PC-3 (cell line): ENCODE measurements at regions of chr15 and their contacts with region 1.

Region 1: GRCh38 chr15:51380999-51381795 is 39.7 kb downstream of the GLDN start:
- DNase-seq: peak; percentile 77
- ATAC-seq: peak; percentile 87
- H3K4me3 ChIP-seq: no peak overlapping the region
- H3K27ac ChIP-seq: no peak overlapping the region
- H3K4me1 ChIP-seq: peaks cover 11% of the 10 kb centered on the region
- H3K27me3 ChIP-seq: no peaks in the 10 kb centered on the region
- CTCF ChIP-seq: peak; percentile 96

Region 2: GRCh38 chr15:51162865-51163762 is 218.1 kb before region 1 on chr15:
- CTCF ChIA-PET with region 1: interaction called, 3 read pairs
- POLR2A ChIA-PET with region 1: no interaction called
- intact Hi-C with region 1: loop called (anchors 5 kb)
- DNase-seq: peak; percentile 75
- ATAC-seq: peak; percentile 91
- H3K4me3 ChIP-seq: peak overlapping the region; percentile 56
- H3K27ac ChIP-seq: no peak overlapping the region
- H3K4me1 ChIP-seq: peaks cover 6% of the 10 kb centered on the region
- H3K27me3 ChIP-seq: no peaks in the 10 kb centered on the region
- CTCF ChIP-seq: peak; percentile 92

Region 3: DNA sequence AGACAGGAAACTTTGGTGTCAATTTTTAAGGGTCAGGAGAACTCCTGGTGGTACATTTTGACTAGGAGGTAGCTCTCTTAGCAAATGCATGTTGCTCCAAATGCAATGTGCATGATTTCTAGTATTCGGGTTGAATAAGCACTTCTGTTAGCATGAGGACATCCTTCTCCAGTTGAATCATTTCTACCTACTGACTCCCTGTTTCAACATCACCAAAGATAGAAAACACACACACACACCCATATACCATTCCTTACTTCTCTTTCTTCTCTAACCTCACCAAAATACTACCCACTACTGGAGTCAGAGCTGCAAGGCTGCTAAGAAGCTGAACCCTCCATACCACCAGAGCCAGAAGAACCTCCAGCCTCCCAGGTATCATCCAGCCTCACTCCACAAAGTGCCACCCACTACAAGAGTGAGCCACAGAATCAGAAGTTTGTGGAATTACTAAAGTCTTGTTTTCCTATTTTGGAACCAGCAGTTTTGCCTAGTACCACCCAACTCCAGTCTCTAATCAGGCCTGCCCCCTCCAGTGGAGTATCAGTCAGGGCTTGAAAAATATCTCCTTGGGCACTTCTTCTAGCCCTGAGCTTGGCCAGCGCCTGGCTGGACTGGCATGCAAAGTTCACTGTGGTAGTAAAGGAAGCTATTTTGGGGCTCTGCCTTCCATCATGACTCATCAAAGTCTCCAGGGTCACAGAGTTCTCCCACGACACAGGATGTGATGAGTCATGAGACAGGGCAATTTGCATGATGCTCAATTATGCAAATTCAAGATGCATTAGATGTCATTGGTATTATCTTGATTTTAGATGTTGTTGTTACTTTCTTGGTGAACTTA is 153.0 kb before region 1 on chr15:
- CTCF ChIA-PET with region 1: no interaction called
- POLR2A ChIA-PET with region 1: no interaction called
- intact Hi-C with region 1: loop called (anchors 1 kb)
- DNase-seq: peak; percentile 52
- ATAC-seq: peak; percentile 48; the same call in 1 of the 2 replicates
- H3K4me3 ChIP-seq: no peak overlapping the region
- H3K27ac ChIP-seq: no peak overlapping the region
- H3K4me1 ChIP-seq: peaks cover 25% of the 10 kb centered on the region
- H3K27me3 ChIP-seq: no peaks in the 10 kb centered on the region
- CTCF ChIP-seq: no peak

Region 4: DNA sequence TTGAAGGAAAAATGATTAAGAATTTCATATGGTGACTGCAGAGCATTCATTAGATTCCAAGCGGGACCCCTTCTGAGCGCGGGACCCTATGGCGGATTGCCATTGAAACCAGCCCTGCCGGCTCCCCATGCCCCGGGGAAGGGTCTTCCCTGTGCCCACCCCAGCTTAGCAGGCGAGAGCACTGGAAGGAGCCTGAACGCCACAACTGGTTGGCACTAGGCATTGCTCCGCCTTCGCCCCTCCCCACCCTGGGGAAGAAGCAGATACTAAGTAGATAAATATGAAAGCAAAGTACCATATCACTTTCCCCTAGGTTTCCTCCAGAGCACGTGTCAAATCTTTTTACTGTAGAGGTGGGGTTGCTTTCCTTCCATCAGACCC is 113.5 kb before region 1 on chr15:
- CTCF ChIA-PET with region 1: no interaction called
- POLR2A ChIA-PET with region 1: no interaction called
- intact Hi-C with region 1: no loop called
- DNase-seq: peak; percentile 6
- ATAC-seq: peak; percentile 65
- H3K4me3 ChIP-seq: peak overlapping the region; percentile 76
- H3K27ac ChIP-seq: no peak overlapping the region
- H3K4me1 ChIP-seq: no peaks in the 10 kb centered on the region
- H3K27me3 ChIP-seq: peaks cover 49% of the 10 kb centered on the region
- CTCF ChIP-seq: no peak

Region 5: GRCh38 chr15:51281368-51281967 is 99.7 kb before region 1 on chr15:
- CTCF ChIA-PET with region 1: interaction called, 25 read pairs
- POLR2A ChIA-PET with region 1: no interaction called
- intact Hi-C with region 1: loop called (anchors 1 kb)
- DNase-seq: peak; percentile 63
- ATAC-seq: peak; percentile 90
- H3K4me3 ChIP-seq: no peak overlapping the region
- H3K27ac ChIP-seq: no peak overlapping the region
- H3K4me1 ChIP-seq: no peaks in the 10 kb centered on the region
- H3K27me3 ChIP-seq: peaks cover 33% of the 10 kb centered on the region
- CTCF ChIP-seq: peak; percentile 70

Region 6: DNA sequence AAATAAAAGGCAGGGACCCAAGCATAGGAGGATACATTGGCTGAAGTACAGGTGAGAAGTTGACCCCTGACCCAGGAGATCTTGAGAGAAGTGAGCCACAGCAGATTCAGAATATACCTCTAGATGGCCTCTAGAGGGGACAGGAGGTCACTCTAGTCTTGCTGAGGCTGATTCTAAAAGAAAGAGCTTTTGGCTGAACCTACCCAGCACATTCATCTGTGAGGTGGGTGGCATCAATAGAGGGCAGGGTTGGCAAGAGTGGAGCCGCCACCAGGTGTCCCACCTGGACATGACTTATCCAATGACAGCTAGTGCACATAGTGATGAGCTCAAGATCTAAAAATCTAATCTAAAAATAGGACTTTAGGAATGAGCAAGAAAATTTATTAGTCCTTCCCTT is 94.4 kb before region 1 on chr15:
- CTCF ChIA-PET with region 1: interaction called, 25 read pairs
- POLR2A ChIA-PET with region 1: no interaction called
- intact Hi-C with region 1: loop called (anchors 1 kb)
- DNase-seq: peak; percentile 40
- ATAC-seq: peak; percentile 64
- H3K4me3 ChIP-seq: no peak overlapping the region
- H3K27ac ChIP-seq: no peak overlapping the region
- H3K4me1 ChIP-seq: no peaks in the 10 kb centered on the region
- H3K27me3 ChIP-seq: no peaks in the 10 kb centered on the region
- CTCF ChIP-seq: peak; percentile 64

Region 7: GRCh38 chr15:51303538-51303937 is 77.7 kb before region 1 on chr15:
- CTCF ChIA-PET with region 1: no interaction called
- POLR2A ChIA-PET with region 1: no interaction called
- intact Hi-C with region 1: no loop called
- DNase-seq: no peak
- ATAC-seq: no peak
- H3K4me3 ChIP-seq: no peak overlapping the region
- H3K27ac ChIP-seq: no peak overlapping the region
- H3K4me1 ChIP-seq: no peaks in the 10 kb centered on the region
- H3K27me3 ChIP-seq: no peaks in the 10 kb centered on the region; the same call in 1 of the 2 replicates
- CTCF ChIP-seq: no peak

Region 8: DNA sequence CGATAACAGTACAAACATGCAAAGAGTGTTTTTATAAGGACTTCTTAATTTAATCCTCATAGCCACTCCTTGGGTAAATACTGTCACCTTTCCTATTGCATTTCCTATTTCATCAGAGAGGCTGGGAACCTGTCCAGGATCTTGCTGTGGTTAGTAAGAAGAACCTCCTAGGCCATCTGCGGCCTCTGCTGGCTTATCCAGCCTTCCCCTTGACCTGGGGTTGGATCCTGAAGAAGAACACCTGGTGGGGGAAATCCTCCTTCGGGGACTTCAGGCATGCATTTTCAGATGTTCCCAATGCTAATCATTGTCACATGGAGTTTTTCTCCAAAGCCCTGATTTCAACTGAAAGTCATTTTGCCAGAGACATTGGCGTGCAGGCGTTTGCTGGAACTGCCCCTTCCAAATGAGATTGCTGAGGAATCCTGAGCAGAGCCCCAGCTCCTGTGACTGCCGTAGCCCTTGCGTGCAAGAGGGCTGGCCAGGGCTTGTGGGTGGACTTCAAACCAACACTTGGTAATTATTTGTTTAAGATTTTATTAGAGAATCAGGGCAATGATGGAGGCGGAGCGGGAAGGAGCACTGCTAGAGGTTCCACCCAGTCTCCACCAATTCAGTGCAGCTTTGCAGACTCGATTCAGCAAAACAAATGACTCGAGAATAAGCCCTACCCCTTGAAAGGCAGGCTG is 14.1 kb before region 1 on chr15:
- CTCF ChIA-PET with region 1: interaction called, 3 read pairs
- POLR2A ChIA-PET with region 1: no interaction called
- intact Hi-C with region 1: loop called (anchors 1 kb)
- DNase-seq: peak; percentile 83
- ATAC-seq: peak; percentile 65
- H3K4me3 ChIP-seq: peak overlapping the region; percentile 30; the same call in 1 of the 2 replicates
- H3K27ac ChIP-seq: peak overlapping the region; percentile 95
- H3K4me1 ChIP-seq: peaks cover 46% of the 10 kb centered on the region
- H3K27me3 ChIP-seq: no peaks in the 10 kb centered on the region
- CTCF ChIP-seq: 0 out of 2 replicates have a peak, but pooled peaks have one; percentile 27

Region 9: DNA sequence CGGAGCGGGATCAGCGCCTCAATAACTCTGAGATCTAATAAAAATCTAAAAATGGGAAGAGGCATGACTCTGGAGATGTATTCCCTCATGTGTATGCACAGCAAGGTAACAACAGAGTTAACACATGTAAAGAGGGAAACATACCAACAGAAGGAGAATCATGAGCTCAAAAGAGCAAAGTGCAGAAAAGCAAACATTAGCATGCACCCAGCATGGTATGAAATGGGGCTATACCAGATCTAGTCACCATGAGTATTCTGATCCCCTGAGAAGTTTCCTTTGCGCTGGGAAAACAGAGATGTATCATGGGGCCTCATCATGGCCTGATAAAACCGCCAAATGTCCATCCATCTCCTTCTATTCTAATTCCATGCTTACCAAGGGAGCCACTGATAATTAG is 89.3 kb after region 1 on chr15:
- CTCF ChIA-PET with region 1: no interaction called
- POLR2A ChIA-PET with region 1: no interaction called
- intact Hi-C with region 1: no loop called
- DNase-seq: no peak
- ATAC-seq: no peak
- H3K4me3 ChIP-seq: no peak overlapping the region
- H3K27ac ChIP-seq: no peak overlapping the region
- H3K4me1 ChIP-seq: no peaks in the 10 kb centered on the region
- H3K27me3 ChIP-seq: no peaks in the 10 kb centered on the region
- CTCF ChIP-seq: no peak

Region 10: DNA sequence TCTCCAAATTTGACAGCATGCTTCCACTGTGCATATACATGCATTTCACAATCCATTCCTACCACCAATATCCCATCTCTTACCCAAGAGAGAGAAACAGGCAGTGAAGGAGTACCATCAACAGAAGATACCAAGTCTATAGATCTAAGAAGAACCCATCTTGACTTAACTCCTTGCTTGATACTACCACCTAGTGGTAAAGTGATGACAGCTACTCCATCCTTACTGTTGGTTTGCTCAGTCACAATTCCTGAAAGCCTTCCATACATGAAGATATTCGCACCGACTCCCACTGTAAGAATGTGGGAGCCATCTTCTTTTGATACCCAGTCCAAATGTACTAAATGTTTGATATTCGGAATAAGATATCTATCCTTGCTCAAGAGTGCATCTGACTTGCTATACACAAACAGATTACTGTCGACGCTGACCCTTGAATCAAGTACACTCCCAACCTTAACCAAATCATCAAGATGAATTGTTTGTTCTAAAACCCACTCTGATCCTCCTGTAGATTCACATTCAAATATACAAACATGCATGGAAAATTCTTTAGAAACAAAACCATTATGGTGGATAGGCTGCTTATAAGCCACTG is 118.3 kb after region 1 on chr15:
- CTCF ChIA-PET with region 1: interaction called, 7 read pairs
- POLR2A ChIA-PET with region 1: no interaction called
- intact Hi-C with region 1: loop called (anchors 5 kb)
- DNase-seq: peak; percentile 60
- ATAC-seq: peak; percentile 71
- H3K4me3 ChIP-seq: no peak overlapping the region
- H3K27ac ChIP-seq: no peak overlapping the region
- H3K4me1 ChIP-seq: peaks cover 12% of the 10 kb centered on the region
- H3K27me3 ChIP-seq: no peaks in the 10 kb centered on the region
- CTCF ChIP-seq: peak; percentile 77

Region 11: GRCh38 chr15:51536965-51537574 is 155.9 kb after region 1 on chr15:
- CTCF ChIA-PET with region 1: no interaction called
- POLR2A ChIA-PET with region 1: no interaction called
- intact Hi-C with region 1: no loop called
- DNase-seq: peak; percentile 33
- ATAC-seq: no peak
- H3K4me3 ChIP-seq: no peak overlapping the region
- H3K27ac ChIP-seq: no peak overlapping the region
- H3K4me1 ChIP-seq: peaks cover 13% of the 10 kb centered on the region; the same call in 1 of the 2 replicates
- H3K27me3 ChIP-seq: no peaks in the 10 kb centered on the region
- CTCF ChIP-seq: peak; percentile 77